ENCODE measurements at regions of chr6 and their contacts with region 1.

Region 1: GRCh38 chr6:110179401-110180227 is at the start of gene WASF1:
- H3K4me3 Mint-ChIP-seq: no peak within 1 kb of the TSS
- H3K27ac Mint-ChIP-seq: no peak within 1 kb of the TSS
- H3K4me1 Mint-ChIP-seq: peaks cover 7% of the 10 kb centered on the region
- H3K27me3 Mint-ChIP-seq: peaks cover 5% of the 10 kb centered on the region

Region 2: GRCh38 chr6:109690737-109691621 is 488.6 kb before region 1 on chr6 and contains the starts of genes AK9 and FIG4:
- intact Hi-C with region 1: loop called (anchors 1 kb)
- H3K4me3 Mint-ChIP-seq: peak within 1 kb of the TSS; percentile 85
- H3K27ac Mint-ChIP-seq: peak within 1 kb of the TSS; percentile 96
- H3K4me1 Mint-ChIP-seq: peaks cover 48% of the 10 kb centered on the region
- H3K27me3 Mint-ChIP-seq: no peaks in the 10 kb centered on the region

Region 3: GRCh38 chr6:110307368-110307767 is 127.8 kb after region 1 on chr6:
- intact Hi-C with region 1: no loop called
- H3K4me3 Mint-ChIP-seq: no peak overlapping the region
- H3K27ac Mint-ChIP-seq: no peak overlapping the region
- H3K4me1 Mint-ChIP-seq: no peaks in the 10 kb centered on the region
- H3K27me3 Mint-ChIP-seq: no peaks in the 10 kb centered on the region

Region 4: DNA sequence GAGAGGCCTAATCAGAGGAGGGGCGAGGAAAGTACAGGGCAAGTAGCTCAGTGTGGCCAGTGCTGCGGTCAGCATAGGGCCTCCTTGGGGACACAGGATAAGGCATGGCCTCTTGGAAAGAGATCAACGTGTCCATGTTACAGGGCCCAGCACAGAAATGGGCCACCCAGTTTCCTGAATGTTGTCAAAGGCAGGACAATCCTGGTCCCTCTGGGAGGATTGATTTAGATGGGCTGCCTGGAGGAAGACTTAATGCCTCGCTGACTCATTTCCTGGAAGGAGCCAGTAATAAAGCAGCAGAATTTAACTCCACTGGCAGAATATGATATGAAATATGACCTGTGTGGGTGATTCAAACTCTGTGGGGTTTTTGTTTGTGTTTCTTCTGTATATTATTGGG is 219.2 kb after region 1 on chr6:
- intact Hi-C with region 1: loop called (anchors 10 kb)
- H3K4me3 Mint-ChIP-seq: no peak overlapping the region
- H3K27ac Mint-ChIP-seq: no peak overlapping the region
- H3K4me1 Mint-ChIP-seq: peaks cover 15% of the 10 kb centered on the region
- H3K27me3 Mint-ChIP-seq: no peaks in the 10 kb centered on the region

Measured in dendritic cell treated with granulocyte-macrophage colony-stimulating factor and Interleukin-4, amounts not matched to agents 40 ng/mL and 50 ng/mL, for 4 days (primary cell).